MCF 10A (cell line): ENCODE measurements at regions of chr12 and their contacts with region 1.

Region 1: GRCh38 chr12:79690638-79691493 is at the start of gene PAWR:
- DNase-seq: peak; percentile 86
- H3K4me3 Mint-ChIP-seq: peak within 1 kb of the TSS; percentile 87
- H3K27ac Mint-ChIP-seq: peak within 1 kb of the TSS; percentile 96
- H3K4me1 Mint-ChIP-seq: peaks cover 32% of the 10 kb centered on the region
- H3K27me3 Mint-ChIP-seq: no peaks in the 10 kb centered on the region
- CTCF ChIP-seq: peak; percentile 17
- total RNA-seq, gene PAWR: 248 and 330 TPM in 2 replicates

Region 2: DNA sequence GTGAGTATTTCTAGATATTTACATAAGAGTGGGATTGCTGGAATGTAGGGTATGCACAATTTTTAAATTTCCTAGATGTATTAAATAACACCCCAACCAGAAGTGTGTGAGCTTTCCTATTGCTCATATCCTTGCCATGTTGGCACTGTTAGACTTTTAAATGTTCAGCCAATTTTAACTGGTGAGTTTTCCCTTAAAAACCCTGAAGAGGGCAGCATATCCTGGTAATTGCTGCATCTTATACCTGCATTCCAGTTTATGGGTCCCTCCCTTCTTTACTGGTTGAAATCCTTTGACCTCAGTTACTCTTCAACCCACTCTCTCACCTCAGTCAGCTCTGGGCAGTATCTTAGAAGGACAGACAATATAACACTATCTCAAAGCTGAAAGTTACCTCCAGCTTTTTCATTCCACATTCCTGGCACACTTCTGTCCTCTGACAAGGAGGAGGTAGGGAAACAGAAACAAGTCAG is 270.7 kb before region 1 on chr12:
- CTCF ChIA-PET with region 1: interaction called, 16 read pairs
- POLR2A ChIA-PET with region 1: interaction called, 31 read pairs
- intact Hi-C with region 1: loop called (anchors 1 kb)
- DNase-seq: peak; percentile 79
- H3K4me3 Mint-ChIP-seq: no peak overlapping the region
- H3K27ac Mint-ChIP-seq: peak overlapping the region; percentile 49
- H3K4me1 Mint-ChIP-seq: peaks cover 43% of the 10 kb centered on the region
- H3K27me3 Mint-ChIP-seq: no peaks in the 10 kb centered on the region
- CTCF ChIP-seq: peak; percentile 58

Region 3: DNA sequence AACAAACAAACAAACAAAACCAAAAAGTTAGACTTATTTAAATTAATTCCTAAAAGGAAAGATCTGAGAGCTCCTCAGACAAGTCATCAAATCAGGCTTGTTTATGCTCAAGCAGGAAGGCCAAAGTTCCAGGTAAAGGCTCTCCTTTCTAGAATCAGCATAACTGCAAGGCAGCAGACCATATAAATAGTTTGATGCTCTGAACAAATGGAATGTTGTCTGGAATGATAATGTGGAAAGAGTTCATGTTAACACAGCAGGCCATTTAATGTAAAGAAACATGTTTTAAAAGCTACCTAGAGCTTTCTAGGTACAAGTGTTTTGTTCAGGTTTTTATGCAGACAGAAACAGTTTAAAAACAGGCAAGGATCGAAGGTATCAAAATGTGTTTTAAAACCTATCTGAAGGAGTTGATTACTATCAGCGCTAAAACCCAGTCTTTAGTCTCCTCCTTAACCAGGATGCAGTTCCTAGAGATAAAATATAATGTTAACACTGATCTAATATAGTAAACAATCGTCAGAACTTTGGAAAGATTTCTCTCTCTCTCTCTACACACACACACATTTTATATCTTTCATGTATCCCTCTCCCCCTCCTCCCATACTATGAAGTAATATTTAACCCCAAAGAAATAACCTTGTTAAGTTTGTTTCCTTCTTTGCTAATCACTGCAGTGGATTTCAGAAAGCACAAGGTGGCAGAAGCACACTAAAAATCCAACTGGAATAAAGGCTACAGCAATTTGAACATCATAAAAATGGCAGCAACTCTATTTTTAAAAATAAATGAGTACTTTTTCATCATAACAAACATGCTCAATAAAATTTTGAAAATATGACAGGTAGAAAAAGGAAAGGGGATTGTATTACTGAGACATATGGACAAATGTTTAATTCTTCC is 135.6 kb before region 1 on chr12:
- CTCF ChIA-PET with region 1: interaction called, 8 read pairs
- POLR2A ChIA-PET with region 1: interaction called, 7 read pairs
- intact Hi-C with region 1: loop called (anchors 2 kb)
- DNase-seq: peak; percentile 49
- H3K4me3 Mint-ChIP-seq: no peak overlapping the region
- H3K27ac Mint-ChIP-seq: peak overlapping the region; percentile 32
- H3K4me1 Mint-ChIP-seq: peaks cover 16% of the 10 kb centered on the region
- H3K27me3 Mint-ChIP-seq: no peaks in the 10 kb centered on the region
- CTCF ChIP-seq: peak; percentile 41

Region 4: GRCh38 chr12:79629561-79629960 is 61.3 kb before region 1 on chr12:
- CTCF ChIA-PET with region 1: interaction called, 4 read pairs
- POLR2A ChIA-PET with region 1: interaction called, 33 read pairs
- intact Hi-C with region 1: no loop called
- DNase-seq: no peak
- H3K4me3 Mint-ChIP-seq: no peak overlapping the region
- H3K27ac Mint-ChIP-seq: peak overlapping the region; percentile 7
- H3K4me1 Mint-ChIP-seq: peaks cover 25% of the 10 kb centered on the region
- H3K27me3 Mint-ChIP-seq: no peaks in the 10 kb centered on the region
- CTCF ChIP-seq: no peak

Region 5: GRCh38 chr12:79706215-79706614 is 15.3 kb after region 1 on chr12:
- CTCF ChIA-PET with region 1: interaction called, 5 read pairs
- POLR2A ChIA-PET with region 1: interaction called, 13 read pairs
- intact Hi-C with region 1: no loop called
- DNase-seq: no peak
- H3K4me3 Mint-ChIP-seq: no peak overlapping the region
- H3K27ac Mint-ChIP-seq: no peak overlapping the region
- H3K4me1 Mint-ChIP-seq: peaks cover 5% of the 10 kb centered on the region
- H3K27me3 Mint-ChIP-seq: no peaks in the 10 kb centered on the region
- CTCF ChIP-seq: no peak

Region 6: DNA sequence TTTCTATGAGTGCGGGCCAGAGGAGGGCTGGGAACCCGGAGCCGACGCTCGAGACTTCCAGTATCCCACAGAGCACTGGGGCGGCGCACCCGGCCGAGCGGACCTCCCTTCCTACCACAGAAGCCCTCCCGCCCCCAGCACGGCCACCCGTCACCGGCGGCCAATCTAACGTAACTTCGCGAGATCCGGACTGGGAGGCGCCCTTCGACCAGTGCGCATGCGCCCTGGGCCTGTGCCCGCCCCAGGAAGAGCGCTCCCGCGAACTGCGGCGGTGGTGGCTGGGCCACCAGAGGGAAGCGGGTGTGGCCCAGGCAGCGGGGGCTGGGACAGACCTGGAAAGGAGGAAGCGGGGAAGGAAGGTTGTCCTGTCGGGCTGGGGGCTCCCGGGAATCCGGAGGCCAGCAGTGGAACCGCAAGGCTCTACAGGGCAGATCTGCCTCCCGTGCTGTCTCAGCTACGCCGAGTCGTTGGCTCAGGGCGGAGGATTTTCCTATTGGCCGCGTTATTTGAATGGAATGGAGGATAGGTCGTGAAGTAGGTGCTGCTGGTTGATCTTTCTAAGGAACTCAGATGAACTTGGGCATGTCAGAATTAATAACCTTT is 244.3 kb after region 1 on chr12 and contains the start of gene PPP1R12A:
- CTCF ChIA-PET with region 1: interaction called, 3 read pairs
- POLR2A ChIA-PET with region 1: interaction called, 42 read pairs
- intact Hi-C with region 1: loop called (anchors 1 kb)
- DNase-seq: peak; percentile 98
- H3K4me3 Mint-ChIP-seq: peak within 1 kb of the TSS; percentile 92
- H3K27ac Mint-ChIP-seq: peak within 1 kb of the TSS; percentile 96
- H3K4me1 Mint-ChIP-seq: peaks cover 13% of the 10 kb centered on the region
- H3K27me3 Mint-ChIP-seq: no peaks in the 10 kb centered on the region
- CTCF ChIP-seq: no peak
- total RNA-seq, gene PPP1R12A: 67.6 and 78.0 TPM in 2 replicates